ENCODE measurements at regions of chr14 and their contacts with region 1.

Region 1: DNA sequence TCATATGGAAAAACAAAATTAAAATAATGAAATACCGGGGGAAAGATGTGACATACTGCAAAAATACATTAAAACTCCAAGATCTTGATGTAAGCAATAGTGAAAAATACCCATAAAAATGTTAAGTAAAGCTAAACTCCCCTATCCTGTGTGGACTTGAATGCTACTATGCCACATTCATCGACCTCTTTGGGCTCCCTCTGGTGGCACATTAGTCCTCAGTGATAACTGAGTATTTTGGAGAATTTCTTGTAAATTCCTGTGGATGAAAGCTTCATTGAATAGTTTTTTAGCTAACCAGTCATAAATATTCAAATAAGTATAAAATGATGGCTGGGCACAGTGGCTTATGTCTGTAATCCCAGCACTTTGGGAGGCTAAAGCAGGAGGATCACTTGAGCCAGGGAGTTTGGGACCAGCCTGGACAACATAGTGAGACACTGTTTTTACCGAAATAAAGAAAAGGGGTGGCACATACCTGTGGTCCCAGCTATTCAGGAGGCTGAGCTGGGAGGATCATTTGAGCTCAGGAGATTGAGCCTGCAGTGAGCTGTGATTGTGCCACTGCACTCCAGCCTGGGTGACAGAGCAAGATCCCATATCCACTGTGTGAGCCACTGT is 42.4 kb upstream of the SGPP1 start:
- DNase-seq: peak; percentile 76
- ATAC-seq: peak; percentile 87
- H3K4me3 ChIP-seq: no peak overlapping the region
- H3K4me3 Mint-ChIP-seq: peak overlapping the region; percentile 32
- H3K27ac ChIP-seq: no peak overlapping the region
- H3K27ac Mint-ChIP-seq: peak overlapping the region; percentile 5
- H3K4me1 ChIP-seq: peaks cover 10 to 22% of the 10 kb centered on the region in 2 donors
- H3K4me1 Mint-ChIP-seq: peaks cover 12% of the 10 kb centered on the region
- H3K27me3 ChIP-seq: no peaks in the 10 kb centered on the region
- H3K27me3 Mint-ChIP-seq: no peaks in the 10 kb centered on the region
- CTCF ChIP-seq: peak; percentile 82

Region 2: DNA sequence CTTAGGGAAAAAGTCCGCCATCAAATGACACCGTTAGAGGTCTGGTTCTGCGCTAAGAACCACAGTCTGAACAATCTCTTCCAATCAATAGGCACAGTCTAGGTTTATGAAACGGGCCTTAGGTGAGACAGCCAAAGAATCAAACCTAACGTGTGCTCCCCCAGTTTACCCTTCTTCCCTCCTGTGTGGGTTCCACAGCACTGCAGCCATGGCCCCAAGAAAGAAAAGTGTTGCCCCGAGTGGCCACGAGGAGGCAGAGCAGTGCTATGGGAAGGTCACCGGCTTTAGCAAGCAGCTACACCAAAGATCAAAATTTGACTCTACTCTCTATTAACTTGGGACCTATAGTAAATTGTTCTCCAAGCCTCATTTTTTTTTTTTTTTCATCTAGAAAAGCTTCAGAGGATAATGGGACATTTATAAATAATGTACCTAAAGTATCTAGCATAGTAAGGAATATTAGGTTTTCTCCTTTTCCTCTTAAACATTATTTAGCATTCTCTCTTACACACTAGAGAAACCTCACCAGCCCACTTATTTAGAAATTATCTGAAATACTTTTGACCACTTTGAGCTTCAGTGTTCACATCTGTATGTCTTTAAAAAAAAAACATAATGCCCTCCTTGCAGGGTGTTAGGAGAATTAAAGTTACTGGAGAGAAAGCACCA is 381.4 kb before region 1 on chr14:
- CTCF ChIA-PET with region 1: interaction called, 37 read pairs
- POLR2A ChIA-PET with region 1: no interaction called
- intact Hi-C with region 1: no loop called
- DNase-seq: peak; percentile 45
- ATAC-seq: peak; percentile 36
- H3K4me3 ChIP-seq: no peak overlapping the region
- H3K4me3 Mint-ChIP-seq: no peak overlapping the region
- H3K27ac ChIP-seq: no peak overlapping the region
- H3K27ac Mint-ChIP-seq: no peak overlapping the region
- H3K4me1 ChIP-seq: peaks cover 0 to 1% of the 10 kb centered on the region in 2 donors
- H3K4me1 Mint-ChIP-seq: peaks cover 5% of the 10 kb centered on the region
- H3K27me3 ChIP-seq: no peaks in the 10 kb centered on the region
- H3K27me3 Mint-ChIP-seq: no peaks in the 10 kb centered on the region
- CTCF ChIP-seq: peak; percentile 74

Region 3: DNA sequence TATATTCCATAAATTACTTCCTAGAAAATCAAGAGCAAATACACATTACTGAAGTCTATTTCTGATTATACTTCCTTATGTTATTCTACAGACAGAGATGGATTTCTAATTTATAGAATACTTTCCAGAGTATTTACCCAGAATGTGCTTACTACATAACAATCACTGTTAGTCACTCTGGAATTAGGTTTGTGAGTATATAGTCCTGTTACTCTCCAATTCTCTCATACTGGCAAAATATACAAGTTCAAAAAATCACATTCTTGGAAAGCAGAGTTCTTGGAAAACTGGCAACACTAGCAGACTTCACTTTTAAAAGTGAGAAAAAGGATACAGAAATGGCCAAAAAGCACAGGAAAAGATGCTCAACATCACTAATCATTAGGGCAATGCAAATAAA is 234.4 kb before region 1 on chr14:
- CTCF ChIA-PET with region 1: no interaction called
- POLR2A ChIA-PET with region 1: no interaction called
- intact Hi-C with region 1: no loop called
- DNase-seq: no peak
- ATAC-seq: no peak
- H3K4me3 ChIP-seq: no peak overlapping the region
- H3K4me3 Mint-ChIP-seq: no peak overlapping the region
- H3K27ac ChIP-seq: no peak overlapping the region
- H3K27ac Mint-ChIP-seq: no peak overlapping the region
- H3K4me1 ChIP-seq: no peaks in the 10 kb centered on the region
- H3K4me1 Mint-ChIP-seq: peaks cover 11% of the 10 kb centered on the region
- H3K27me3 ChIP-seq: no peaks in the 10 kb centered on the region
- H3K27me3 Mint-ChIP-seq: no peaks in the 10 kb centered on the region
- CTCF ChIP-seq: no peak

Region 4: DNA sequence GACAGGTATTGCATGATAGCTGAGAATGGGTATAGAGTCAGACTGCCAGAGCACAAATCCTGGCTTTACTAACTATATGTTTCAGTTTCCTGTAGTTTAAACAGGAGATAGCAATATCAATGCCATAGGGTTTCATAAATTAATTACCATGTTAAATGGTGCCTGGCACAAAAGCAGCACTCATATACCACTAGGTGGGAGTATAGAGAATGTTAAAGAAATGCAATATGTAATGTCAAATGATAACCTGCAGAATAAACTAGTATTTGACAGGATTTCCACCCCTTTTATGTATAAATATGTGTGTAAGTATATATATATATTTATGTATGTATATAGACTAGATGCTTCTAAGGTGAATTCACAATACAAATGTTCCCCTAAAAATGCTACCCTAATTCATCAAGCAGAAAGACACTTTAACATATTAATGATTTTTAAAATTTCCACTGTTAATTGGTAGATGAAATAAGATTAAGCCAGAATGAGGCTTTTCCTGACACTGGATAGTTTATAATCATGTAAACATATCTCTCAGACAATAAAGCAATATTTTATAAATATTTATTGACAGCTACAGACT is 137.3 kb before region 1 on chr14:
- CTCF ChIA-PET with region 1: interaction called, 84 read pairs
- POLR2A ChIA-PET with region 1: no interaction called
- intact Hi-C with region 1: loop called (anchors 1 kb)
- DNase-seq: peak; percentile 58
- ATAC-seq: peak; percentile 66
- H3K4me3 ChIP-seq: no peak overlapping the region
- H3K4me3 Mint-ChIP-seq: no peak overlapping the region
- H3K27ac ChIP-seq: no peak overlapping the region
- H3K27ac Mint-ChIP-seq: no peak overlapping the region
- H3K4me1 ChIP-seq: peaks cover 0 to 6% of the 10 kb centered on the region in 2 donors
- H3K4me1 Mint-ChIP-seq: peaks cover 38% of the 10 kb centered on the region
- H3K27me3 ChIP-seq: no peaks in the 10 kb centered on the region
- H3K27me3 Mint-ChIP-seq: no peaks in the 10 kb centered on the region
- CTCF ChIP-seq: peak; percentile 80

Region 5: GRCh38 chr14:63717702-63718101 is 52.6 kb before region 1 on chr14:
- CTCF ChIA-PET with region 1: interaction called, 11 read pairs
- POLR2A ChIA-PET with region 1: no interaction called
- intact Hi-C with region 1: no loop called
- DNase-seq: peak; percentile 37
- ATAC-seq: no peak
- H3K4me3 ChIP-seq: no peak overlapping the region
- H3K4me3 Mint-ChIP-seq: no peak overlapping the region
- H3K27ac ChIP-seq: no peak overlapping the region
- H3K27ac Mint-ChIP-seq: no peak overlapping the region
- H3K4me1 ChIP-seq: peaks cover 0 to 5% of the 10 kb centered on the region in 2 donors
- H3K4me1 Mint-ChIP-seq: peaks cover 25% of the 10 kb centered on the region
- H3K27me3 ChIP-seq: no peaks in the 10 kb centered on the region
- H3K27me3 Mint-ChIP-seq: no peaks in the 10 kb centered on the region
- CTCF ChIP-seq: no peak

Region 6: DNA sequence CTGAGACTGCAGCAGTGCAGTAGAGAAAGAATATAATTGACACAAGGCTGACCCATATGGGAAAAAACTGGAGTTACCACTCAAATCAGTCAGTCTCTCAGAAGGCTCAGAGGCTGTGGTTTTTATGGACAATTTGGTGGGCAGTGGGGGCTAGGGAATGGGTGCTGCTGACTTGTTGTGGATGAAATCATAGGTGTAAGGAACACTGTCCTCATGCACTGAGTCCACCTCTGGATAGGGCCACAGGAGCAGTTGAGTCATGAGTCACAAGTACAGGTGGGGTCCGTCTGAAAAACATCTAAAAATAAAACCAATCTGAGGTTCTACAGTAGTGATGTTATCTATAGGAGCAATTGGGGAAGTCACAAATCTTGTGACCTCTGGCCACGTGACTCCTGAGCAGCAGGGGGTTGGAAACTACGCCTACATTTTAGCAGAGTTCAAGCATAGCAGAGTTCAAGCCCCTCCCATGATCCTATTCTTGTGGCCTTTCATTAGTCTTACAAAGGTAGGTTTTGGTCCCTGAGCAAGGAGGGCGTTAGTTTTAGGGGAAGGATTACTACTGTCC is 24.4 kb before region 1 on chr14:
- CTCF ChIA-PET with region 1: interaction called, 26 read pairs
- POLR2A ChIA-PET with region 1: no interaction called
- intact Hi-C with region 1: loop called (anchors 2 kb)
- DNase-seq: peak; percentile 87
- ATAC-seq: peak; percentile 75
- H3K4me3 ChIP-seq: peak overlapping the region in 2 of 5 experiments; percentile 1 to 41
- H3K4me3 Mint-ChIP-seq: peak overlapping the region; percentile 76
- H3K27ac ChIP-seq: peak overlapping the region; percentile 94 to 97
- H3K27ac Mint-ChIP-seq: peak overlapping the region; percentile 99
- H3K4me1 ChIP-seq: peaks cover 39 to 54% of the 10 kb centered on the region in 2 donors
- H3K4me1 Mint-ChIP-seq: peaks cover 40% of the 10 kb centered on the region
- H3K27me3 ChIP-seq: no peaks in the 10 kb centered on the region
- H3K27me3 Mint-ChIP-seq: no peaks in the 10 kb centered on the region
- CTCF ChIP-seq: no peak

Region 7: GRCh38 chr14:63759456-63759855 is 10.8 kb before region 1 on chr14:
- CTCF ChIA-PET with region 1: interaction called, 40 read pairs
- POLR2A ChIA-PET with region 1: no interaction called
- intact Hi-C with region 1: no loop called
- DNase-seq: peak; percentile 45
- ATAC-seq: peak; percentile 63
- H3K4me3 ChIP-seq: peak overlapping the region in 2 of 5 experiments; percentile 30 to 37
- H3K4me3 Mint-ChIP-seq: peak overlapping the region; percentile 87
- H3K27ac ChIP-seq: peak overlapping the region; percentile 35 to 46
- H3K27ac Mint-ChIP-seq: peak overlapping the region; percentile 81
- H3K4me1 ChIP-seq: peaks cover 10 to 15% of the 10 kb centered on the region in 2 donors
- H3K4me1 Mint-ChIP-seq: peaks cover 19% of the 10 kb centered on the region
- H3K27me3 ChIP-seq: no peaks in the 10 kb centered on the region
- H3K27me3 Mint-ChIP-seq: no peaks in the 10 kb centered on the region
- CTCF ChIP-seq: no peak

Region 8: DNA sequence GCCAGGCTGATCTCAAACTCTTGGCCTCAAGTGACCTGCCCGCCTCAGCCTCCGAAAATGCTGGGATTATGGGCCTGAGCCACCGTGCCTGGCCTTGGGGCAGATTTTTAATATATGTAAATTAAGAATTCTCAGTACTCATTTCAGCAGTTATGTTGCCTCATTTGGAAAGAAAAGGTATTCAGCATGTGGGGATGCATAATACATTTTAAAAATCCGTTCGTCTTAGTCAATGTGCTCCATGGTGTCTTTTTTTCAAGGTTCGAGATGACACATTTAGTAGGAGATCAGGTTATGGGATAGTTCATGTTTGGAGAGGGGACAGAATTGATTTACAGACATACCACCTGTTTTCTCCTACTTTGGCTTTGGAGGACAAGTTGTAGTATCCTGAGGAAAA is 92.7 kb after region 1 on chr14:
- CTCF ChIA-PET with region 1: no interaction called
- POLR2A ChIA-PET with region 1: no interaction called
- intact Hi-C with region 1: no loop called
- DNase-seq: no peak
- ATAC-seq: no peak
- H3K4me3 ChIP-seq: no peak overlapping the region
- H3K4me3 Mint-ChIP-seq: peak overlapping the region; percentile 52
- H3K27ac ChIP-seq: no peak overlapping the region
- H3K27ac Mint-ChIP-seq: peak overlapping the region; percentile 78
- H3K4me1 ChIP-seq: peaks cover 29 to 38% of the 10 kb centered on the region in 2 donors
- H3K4me1 Mint-ChIP-seq: peaks cover 43% of the 10 kb centered on the region
- H3K27me3 ChIP-seq: no peaks in the 10 kb centered on the region
- H3K27me3 Mint-ChIP-seq: no peaks in the 10 kb centered on the region
- CTCF ChIP-seq: no peak

Measured in B cell (primary cell).